Posterior vena cava (tissue), 2 donors: ENCODE measurements at regions of chr16 and their contacts with region 1.

Region 1: DNA sequence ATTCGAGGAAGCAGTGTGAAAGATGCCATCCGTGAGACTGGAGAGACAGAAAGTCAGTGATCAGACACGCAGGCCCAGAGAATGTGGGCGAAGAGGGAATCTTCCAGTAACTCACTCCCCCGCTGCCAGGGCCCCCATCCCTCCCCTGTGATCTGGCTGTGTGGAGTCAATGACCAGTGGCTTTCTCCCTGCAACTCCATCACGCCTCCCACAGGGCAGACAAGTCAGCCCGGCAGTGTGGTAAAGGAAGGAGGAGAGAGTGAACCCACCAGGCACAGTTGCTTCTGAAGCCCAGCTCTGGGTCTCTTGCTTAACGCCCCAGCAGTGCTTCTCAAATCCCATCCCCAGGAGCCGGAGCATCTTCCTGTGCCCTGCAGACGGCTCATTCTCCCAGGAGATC is 142.1 kb downstream of the ZNF423 start:
- DNase-seq: no peak

Region 2: DNA sequence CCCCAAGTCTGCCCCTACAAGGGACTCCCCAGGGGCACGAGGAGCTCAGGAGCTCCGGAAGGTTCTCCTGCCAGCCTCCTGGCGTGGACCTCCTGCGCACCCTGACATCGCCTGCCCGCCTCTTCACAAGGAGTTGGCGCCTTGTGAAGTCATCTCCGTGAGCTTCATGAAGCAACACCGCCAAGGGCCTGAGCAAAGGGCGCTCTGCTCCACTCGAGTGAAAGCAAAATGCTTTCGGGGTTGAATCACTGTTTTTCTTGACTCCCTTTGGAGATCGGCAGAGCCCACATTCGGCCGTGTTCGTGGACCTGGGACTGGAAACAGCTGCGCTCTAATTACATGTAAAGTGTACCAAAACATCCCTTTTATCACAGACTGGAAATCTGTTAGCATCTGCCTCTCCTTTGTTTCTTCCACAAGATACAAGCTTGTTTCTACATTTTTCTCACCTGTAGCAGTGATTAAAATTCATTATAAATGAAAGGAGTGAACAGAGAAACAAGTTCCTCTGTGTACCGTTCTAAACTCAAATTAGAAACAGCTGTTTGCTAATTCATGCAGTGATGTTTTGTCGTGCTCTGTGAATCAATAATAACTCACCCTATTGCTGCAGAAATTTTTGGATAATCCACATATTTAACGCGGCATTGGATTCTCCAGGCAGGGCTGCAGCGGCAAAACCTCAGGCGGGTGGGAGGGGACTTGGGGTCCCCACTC is 61.2 kb before region 1 on chr16:
- intact Hi-C with region 1: no loop called
- DNase-seq: peak; percentile 91

Region 3: DNA sequence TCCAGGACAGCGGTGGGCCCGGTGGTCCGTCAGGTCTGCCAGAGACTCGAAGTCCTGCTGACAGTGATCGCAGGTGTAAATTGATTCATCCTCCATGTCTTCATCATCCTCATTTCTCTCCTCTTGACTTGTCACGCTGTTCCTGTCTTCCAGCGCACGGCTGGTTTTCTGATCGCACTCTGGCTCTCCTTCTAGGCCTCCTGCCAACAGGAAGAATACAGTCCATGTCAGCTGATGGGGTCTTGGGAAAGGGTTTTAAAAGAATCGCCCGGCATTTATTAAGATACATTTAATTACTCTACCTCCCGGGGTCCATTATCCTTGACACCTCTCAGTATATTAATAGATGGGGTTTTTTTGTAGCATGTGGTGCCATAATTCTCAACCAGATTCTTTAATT is 17.0 kb after region 1 on chr16:
- intact Hi-C with region 1: loop called in 1 of 2 experiments (anchors 2 kb)
- DNase-seq: no peak

Region 4: DNA sequence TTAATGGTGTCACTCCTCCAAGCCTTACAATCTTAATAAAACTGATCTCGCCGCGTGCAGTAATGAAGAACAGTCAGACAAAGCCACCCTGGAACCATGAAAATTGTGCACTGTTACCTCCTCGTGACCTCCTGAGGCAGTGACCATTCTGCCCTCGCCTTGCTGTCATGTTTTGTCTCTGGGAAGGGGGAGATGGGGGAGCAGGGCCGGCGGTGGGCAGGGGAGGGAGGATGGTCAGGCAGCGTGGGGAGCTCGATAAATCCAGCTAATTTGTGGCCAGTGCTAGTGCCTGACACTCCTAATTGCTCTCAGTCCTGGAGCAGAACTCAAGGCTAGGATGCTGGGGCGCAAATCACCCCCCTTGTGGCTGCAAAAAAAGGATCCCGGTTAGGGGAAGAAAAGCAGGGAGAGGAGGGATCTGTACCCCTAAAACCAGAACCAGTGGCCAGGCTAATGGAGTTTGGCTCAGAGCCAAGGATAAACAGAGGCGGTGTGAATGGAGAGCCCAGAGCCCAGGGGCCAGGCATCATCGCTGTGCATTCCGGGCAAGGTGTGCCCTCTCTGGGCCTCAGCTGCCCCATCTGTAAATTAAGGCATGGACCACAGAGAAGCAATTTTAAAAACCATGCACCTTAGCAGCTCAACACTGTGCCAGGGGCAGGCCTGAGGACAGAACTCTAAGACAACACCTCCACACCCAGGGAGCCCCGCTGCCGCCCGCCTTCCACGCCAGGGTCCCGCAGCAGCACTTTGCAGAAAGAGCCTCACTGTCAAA is 28.8 kb after region 1 on chr16:
- intact Hi-C with region 1: no loop called
- DNase-seq: no peak